Caco-2 (cell line): ENCODE measurements at regions of chr1 and their contacts with region 1.

Region 1: GRCh38 chr1:94115900-94116436 is 5.0 kb downstream of the ABCA4 start:
- DNase-seq: no peak
- H3K4me3 ChIP-seq: no peak overlapping the region
- H3K4me3 Mint-ChIP-seq: peak overlapping the region; percentile 18
- H3K27ac Mint-ChIP-seq: peak overlapping the region; percentile 88
- H3K4me1 ChIP-seq: peaks cover 57% of the 10 kb centered on the region
- H3K4me1 Mint-ChIP-seq: peaks cover 55% of the 10 kb centered on the region
- H3K27me3 ChIP-seq: no peaks in the 10 kb centered on the region
- H3K27me3 Mint-ChIP-seq: no peaks in the 10 kb centered on the region
- CTCF ChIP-seq: no peak

Region 2: DNA sequence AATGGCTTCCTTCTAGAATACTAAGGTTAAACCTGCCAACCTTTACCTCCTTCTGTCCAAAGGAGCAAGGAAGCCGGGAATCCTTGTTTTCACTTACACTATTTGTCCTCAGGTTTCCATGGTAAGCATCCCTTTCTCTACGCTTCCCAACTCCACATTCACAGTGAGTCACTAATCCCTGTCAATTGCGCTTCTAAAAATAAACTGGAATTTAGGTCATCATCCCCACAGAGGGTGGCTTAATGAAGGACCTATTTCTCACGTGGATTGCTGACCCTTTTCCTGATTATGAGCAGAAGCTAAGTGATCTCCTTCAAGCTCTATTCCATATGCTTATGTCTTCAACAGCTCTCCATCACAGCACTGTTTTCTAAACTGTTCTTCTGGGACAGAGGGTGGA is 44.8 kb after region 1 on chr1:
- CTCF ChIA-PET with region 1: no interaction called
- POLR2A ChIA-PET with region 1: no interaction called
- intact Hi-C with region 1: loop called (anchors 5 kb)
- DNase-seq: no peak
- H3K4me3 ChIP-seq: no peak overlapping the region
- H3K4me3 Mint-ChIP-seq: no peak overlapping the region
- H3K27ac Mint-ChIP-seq: peak overlapping the region; percentile 52
- H3K4me1 ChIP-seq: peaks cover 4% of the 10 kb centered on the region; the same call in 1 of the 2 replicates
- H3K4me1 Mint-ChIP-seq: peaks cover 7% of the 10 kb centered on the region
- H3K27me3 ChIP-seq: no peaks in the 10 kb centered on the region
- H3K27me3 Mint-ChIP-seq: no peaks in the 10 kb centered on the region
- CTCF ChIP-seq: no peak

Region 3: GRCh38 chr1:94237291-94238226 is 121.6 kb after region 1 on chr1 and contains the start of gene ARHGAP29:
- CTCF ChIA-PET with region 1: interaction called, 3 read pairs
- POLR2A ChIA-PET with region 1: no interaction called
- intact Hi-C with region 1: loop called (anchors 1 kb)
- DNase-seq: peak; percentile 88 to 92
- H3K4me3 ChIP-seq: peak within 1 kb of the TSS; percentile 81
- H3K4me3 Mint-ChIP-seq: peak within 1 kb of the TSS; percentile 88
- H3K27ac Mint-ChIP-seq: peak within 1 kb of the TSS; percentile 85
- H3K4me1 ChIP-seq: peaks cover 48% of the 10 kb centered on the region
- H3K4me1 Mint-ChIP-seq: peaks cover 41% of the 10 kb centered on the region
- H3K27me3 ChIP-seq: no peaks in the 10 kb centered on the region
- H3K27me3 Mint-ChIP-seq: no peaks in the 10 kb centered on the region
- CTCF ChIP-seq: no peak
- total RNA-seq, gene ARHGAP29: 30.3 and 31.4 TPM in 2 replicates